Left cardiac atrium (tissue), 4 donors: ENCODE measurements at regions of chr21 and their contacts with region 1.

Region 1: GRCh38 chr21:33542640-33543504 is at the start of gene SON:
- DNase-seq: peak; percentile 99
- ATAC-seq: peak; percentile 97 to 99
- total RNA-seq, gene SON: 152 to 189 TPM

Region 2: DNA sequence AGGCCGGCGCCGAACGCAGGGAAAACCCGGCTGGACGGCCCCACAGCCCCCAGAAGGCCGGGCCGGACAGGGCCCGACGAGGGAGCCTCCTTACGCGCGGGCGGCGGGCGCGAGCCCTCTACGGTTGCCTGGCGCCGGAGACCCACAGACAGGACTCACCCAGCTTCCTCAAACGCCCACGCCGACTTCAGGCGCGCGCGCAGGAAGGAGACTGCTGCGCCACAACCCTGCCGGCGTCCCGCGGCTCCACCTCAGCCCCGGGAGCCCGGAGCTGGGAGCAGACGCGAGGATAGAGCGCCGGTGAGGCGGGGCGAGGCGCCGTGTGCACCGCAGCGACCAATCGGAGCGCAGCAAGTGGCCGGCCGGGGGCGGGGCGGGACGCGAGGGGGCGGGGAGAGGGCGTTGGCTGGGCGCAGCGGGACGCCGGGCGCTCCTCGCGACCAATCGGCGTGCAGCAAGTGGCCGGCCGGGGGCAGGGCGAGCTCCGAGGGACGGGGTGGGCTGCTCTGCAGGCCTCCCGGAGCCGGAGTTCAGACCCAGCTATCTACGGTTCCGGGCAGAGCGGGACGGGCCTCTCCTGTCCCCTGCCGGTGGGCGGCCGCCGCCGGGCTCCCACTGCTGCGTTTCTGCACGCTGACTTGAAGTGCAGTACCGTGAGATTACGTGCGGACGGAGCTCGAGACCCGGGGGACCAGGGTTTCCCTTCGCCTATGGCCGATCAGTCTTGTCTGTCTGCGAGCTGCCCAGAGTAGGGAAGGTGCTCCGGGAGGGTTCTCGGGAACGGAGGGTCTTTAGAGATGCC is 63.0 kb before region 1 on chr21 and contains the start of gene TMEM50B:
- intact Hi-C with region 1: loop called in 1 of 2 experiments (anchors 5 kb)
- DNase-seq: peak; percentile 96
- ATAC-seq: peak; percentile 97 to 98
- total RNA-seq, gene TMEM50B: 33.1 to 39.7 TPM

Region 3: GRCh38 chr21:33598051-33598450 is 55.2 kb after region 1 on chr21:
- intact Hi-C with region 1: loop called in 1 of 2 experiments (anchors 10 kb)
- DNase-seq: no peak
- ATAC-seq: no peak